Naive thymus-derived CD4-positive, alpha-beta T cell (primary cell): ENCODE measurements at regions of chr20 and their contacts with region 1.

Region 1: DNA sequence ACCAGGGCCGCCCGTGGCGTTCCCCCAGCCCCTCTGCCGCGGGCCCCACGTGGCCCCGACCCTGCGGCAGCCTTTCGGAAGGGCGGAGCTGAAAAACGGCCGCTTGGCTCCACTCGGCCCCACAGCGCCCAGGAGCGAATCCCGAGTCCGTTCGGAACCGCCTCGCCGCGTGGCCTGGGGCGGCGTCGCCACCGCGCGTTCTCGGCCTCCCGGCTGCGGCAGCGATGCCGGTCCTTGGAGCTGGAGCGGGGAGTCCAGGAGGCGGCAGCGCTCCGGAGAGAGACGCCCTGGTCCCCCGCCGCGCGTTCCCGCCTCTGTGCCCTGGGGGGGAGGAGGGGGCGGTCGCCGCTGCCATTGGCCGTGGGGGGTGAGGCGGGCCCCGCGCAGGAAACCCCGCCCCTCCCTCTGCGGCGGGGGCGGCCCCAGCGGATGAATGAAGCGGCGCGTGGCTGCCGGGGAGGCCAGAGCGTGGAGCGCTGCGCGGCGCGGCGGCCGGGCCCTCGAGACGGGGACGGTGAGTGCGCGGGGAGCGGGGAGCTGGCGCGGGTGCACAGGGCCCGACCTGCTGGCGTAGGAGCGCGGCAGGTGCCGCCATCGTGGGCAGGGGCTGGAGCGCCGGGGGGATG is at the start of gene SLCO4A1:
- DNase-seq: peak; percentile 76 to 95 (median 83)
- ATAC-seq: peak; percentile 97
- H3K4me3 ChIP-seq: peak within 1 kb of the TSS; percentile 57
- H3K4me3 Mint-ChIP-seq: peak within 1 kb of the TSS; percentile 63 to 88 (median 78)
- H3K27ac ChIP-seq: peak within 1 kb of the TSS; percentile 56
- H3K27ac Mint-ChIP-seq: peak within 1 kb of the TSS in 5 of 9 donors; percentile 10 to 68 (median 53)
- H3K4me1 ChIP-seq: peaks cover 11 to 14% of the 10 kb centered on the region in 2 donors
- H3K4me1 Mint-ChIP-seq: peaks cover 0 to 35% (median 5%) of the 10 kb centered on the region in 7 donors
- H3K27me3 ChIP-seq: no peaks in the 10 kb centered on the region
- H3K27me3 Mint-ChIP-seq: peaks cover 0 to 11% (median 0%) of the 10 kb centered on the region in 5 donors
- total RNA-seq, gene SLCO4A1: 0.81 to 45.5 (median 1.4) TPM

Region 2: DNA sequence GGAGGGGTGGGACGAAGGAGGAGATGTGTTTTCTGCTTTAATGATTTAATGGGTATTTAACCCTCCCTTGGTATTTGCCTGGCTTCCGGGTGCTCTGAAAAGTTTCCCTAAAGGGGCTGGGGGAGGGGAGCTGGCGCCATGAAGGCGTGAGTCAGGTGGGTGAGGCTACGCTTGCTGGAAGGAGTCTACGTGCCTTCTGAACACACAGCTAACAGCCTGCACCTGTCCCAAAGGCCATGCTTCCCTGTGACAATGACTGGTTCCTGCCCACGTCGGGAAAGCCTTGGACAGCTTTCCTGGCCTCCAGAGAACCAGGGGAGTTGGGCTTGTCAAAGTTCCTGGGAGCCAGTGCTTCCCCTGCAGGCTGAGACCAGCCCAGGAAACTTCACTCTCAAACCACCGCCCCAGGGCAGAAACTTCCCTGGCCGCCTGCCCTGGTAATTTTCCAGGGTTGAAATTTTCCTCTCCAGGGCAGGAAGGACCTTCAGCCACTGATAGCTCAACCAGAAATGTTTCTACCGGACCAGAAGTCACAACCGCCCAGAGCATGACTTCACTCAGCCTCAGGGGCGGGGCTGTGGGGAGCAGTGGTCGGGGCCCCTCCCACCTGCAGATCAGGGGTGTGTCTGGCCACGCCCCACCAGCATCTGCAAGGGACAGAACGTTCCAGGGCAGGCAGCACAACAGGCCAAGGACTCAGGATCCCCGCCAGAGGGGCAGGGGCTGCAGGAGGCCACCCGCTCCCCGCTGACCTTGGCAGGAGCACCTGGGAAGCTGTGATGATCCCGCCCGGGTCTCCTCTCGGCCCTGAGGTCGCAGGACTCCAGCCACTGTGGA is 18.4 kb before region 1 on chr20:
- CTCF ChIA-PET with region 1: no interaction called
- POLR2A ChIA-PET with region 1: no interaction called
- intact Hi-C with region 1: loop called (anchors 1 to 2 kb)
- DNase-seq: peak; percentile 31 to 85 (median 58)
- ATAC-seq: peak; percentile 96
- H3K4me3 ChIP-seq: peak overlapping the region; percentile 39
- H3K4me3 Mint-ChIP-seq: peak overlapping the region; percentile 41 to 85 (median 75)
- H3K27ac ChIP-seq: no peak overlapping the region
- H3K27ac Mint-ChIP-seq: peak overlapping the region; percentile 28 to 98 (median 72)
- H3K4me1 ChIP-seq: peaks cover 12 to 21% of the 10 kb centered on the region in 2 donors
- H3K4me1 Mint-ChIP-seq: peaks cover 11 to 38% (median 13%) of the 10 kb centered on the region in 7 donors
- H3K27me3 ChIP-seq: no peaks in the 10 kb centered on the region
- H3K27me3 Mint-ChIP-seq: no peaks in the 10 kb centered on the region

Region 3: DNA sequence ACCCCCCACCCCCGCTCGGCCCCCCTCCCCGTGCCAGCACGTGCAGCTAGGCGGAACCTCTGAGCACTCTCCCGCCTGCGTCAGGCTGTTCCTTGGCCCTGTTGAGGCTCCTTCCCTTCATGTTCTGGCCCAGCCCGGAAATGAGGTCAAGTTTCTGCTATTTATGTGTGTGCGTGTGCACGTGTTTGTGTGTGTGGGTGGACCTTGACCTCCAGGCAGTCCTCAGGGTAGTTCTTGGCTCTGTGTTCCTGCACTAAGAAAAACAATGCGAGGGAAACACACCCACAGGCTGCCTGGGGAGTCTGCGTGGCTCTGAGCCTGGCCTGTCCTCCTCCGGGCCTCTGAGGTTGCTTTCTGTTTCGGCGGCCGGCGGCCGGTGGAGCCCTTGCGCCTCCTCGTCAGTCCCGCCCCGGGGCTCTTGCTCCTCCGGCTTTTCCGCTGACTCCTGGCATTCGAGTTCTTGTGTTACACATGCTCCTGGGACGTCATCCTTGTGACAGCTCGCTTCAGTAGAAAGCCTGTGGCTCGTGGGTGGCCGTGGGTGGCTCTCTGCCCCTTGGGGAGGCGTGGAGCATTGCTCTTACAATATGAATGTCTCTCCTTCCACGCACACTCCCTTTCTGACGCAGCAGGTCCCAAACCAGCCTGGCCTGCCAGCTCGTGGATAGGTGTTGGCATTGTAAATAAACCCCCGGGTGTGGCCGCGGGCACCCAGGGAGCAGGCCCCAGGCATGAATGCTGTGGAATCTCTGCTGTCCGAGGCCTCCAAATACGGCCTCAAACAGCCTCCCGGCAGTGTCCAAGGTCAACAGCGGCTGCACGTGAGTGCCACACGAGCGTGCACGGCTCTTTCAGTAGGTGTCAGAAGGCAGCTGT is 10.1 kb after region 1 on chr20:
- CTCF ChIA-PET with region 1: interaction called, 3 read pairs
- POLR2A ChIA-PET with region 1: interaction called, 19 read pairs
- intact Hi-C with region 1: loop called (anchors 1 kb)
- DNase-seq: peak; percentile 44 to 80 (median 75)
- ATAC-seq: peak; percentile 78
- H3K4me3 ChIP-seq: peak overlapping the region; percentile 40
- H3K4me3 Mint-ChIP-seq: peak overlapping the region; percentile 80 to 95 (median 84)
- H3K27ac ChIP-seq: peak overlapping the region; percentile 81
- H3K27ac Mint-ChIP-seq: peak overlapping the region; percentile 93 to 99 (median 97)
- H3K4me1 ChIP-seq: peaks cover 17 to 20% of the 10 kb centered on the region in 2 donors
- H3K4me1 Mint-ChIP-seq: peaks cover 11 to 45% (median 30%) of the 10 kb centered on the region in 7 donors
- H3K27me3 ChIP-seq: no peaks in the 10 kb centered on the region
- H3K27me3 Mint-ChIP-seq: no peaks in the 10 kb centered on the region

Region 4: DNA sequence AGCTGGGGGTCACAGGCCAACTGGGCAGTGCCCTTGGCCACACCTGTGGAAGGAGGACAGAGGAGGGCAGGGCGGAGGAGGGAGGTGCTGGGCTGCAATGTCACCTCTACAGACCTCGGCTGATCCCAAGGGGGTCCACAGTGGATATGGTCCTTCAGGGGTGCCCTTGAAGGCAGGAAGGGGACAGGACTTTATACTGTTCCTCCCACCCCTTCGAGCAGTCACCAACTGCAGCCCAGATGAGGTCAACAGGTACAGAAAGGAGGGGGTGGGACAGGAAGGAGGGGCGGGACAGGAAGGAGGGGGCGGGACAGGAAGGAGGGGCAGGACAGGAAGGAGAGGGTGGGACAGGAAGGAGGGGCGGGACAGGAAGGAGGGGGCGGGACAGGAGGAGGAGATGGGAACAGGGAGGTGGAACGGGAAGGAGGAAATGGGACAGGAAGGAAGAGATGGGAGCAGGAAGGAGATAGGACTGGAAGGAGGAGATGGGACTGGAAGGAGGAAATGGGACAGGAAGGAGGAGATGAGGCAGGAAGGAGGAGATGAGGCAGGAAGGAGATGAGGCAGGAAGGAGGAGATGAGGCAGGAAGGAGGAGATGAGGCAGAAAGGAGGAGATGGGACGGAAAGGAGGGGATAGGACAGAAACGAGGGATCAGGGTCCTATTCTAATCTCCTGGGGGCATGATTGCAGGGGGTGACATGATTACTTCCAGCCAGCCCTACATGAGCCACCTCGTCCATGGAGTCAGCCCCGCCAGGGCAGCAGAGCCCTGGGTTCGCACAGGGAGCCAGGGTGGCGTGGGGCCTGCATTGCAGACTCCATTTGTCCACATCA is 134.8 kb after region 1 on chr20:
- CTCF ChIA-PET with region 1: no interaction called
- POLR2A ChIA-PET with region 1: no interaction called
- intact Hi-C with region 1: loop called in 1 of 2 experiments (anchors 1 kb)
- DNase-seq: peak in 7 of 9 donors; percentile 35 to 70 (median 57)
- ATAC-seq: peak; percentile 78
- H3K4me3 ChIP-seq: peak overlapping the region; percentile 49
- H3K4me3 Mint-ChIP-seq: peak overlapping the region; percentile 51 to 91 (median 66)
- H3K27ac ChIP-seq: peak overlapping the region; percentile 77
- H3K27ac Mint-ChIP-seq: peak overlapping the region; percentile 90 to 95 (median 93)
- H3K4me1 ChIP-seq: peaks cover 24 to 49% of the 10 kb centered on the region in 2 donors
- H3K4me1 Mint-ChIP-seq: peaks cover 35 to 65% (median 58%) of the 10 kb centered on the region in 7 donors
- H3K27me3 ChIP-seq: no peaks in the 10 kb centered on the region
- H3K27me3 Mint-ChIP-seq: no peaks in the 10 kb centered on the region

Region 5: GRCh38 chr20:62808211-62808865 is 166.2 kb after region 1 on chr20:
- CTCF ChIA-PET with region 1: interaction called, 3 read pairs
- POLR2A ChIA-PET with region 1: no interaction called
- intact Hi-C with region 1: loop called in 1 of 2 experiments (anchors 5 kb)
- DNase-seq: peak; percentile 58 to 84 (median 71)
- ATAC-seq: peak; percentile 70
- H3K4me3 ChIP-seq: no peak overlapping the region
- H3K4me3 Mint-ChIP-seq: peak overlapping the region in 9 of 10 donors; percentile 18 to 82 (median 57)
- H3K27ac ChIP-seq: peak overlapping the region; percentile 22
- H3K27ac Mint-ChIP-seq: peak overlapping the region in 7 of 9 donors; percentile 13 to 88 (median 65)
- H3K4me1 ChIP-seq: peaks cover 16 to 30% of the 10 kb centered on the region in 2 donors
- H3K4me1 Mint-ChIP-seq: peaks cover 16 to 33% (median 25%) of the 10 kb centered on the region in 7 donors
- H3K27me3 ChIP-seq: no peaks in the 10 kb centered on the region
- H3K27me3 Mint-ChIP-seq: no peaks in the 10 kb centered on the region